ENCODE measurements at regions of chr11 and their contacts with region 1.

Region 1: GRCh38 chr11:10878408-10879214 is 20.8 kb upstream of the ZBED5 start:
- DNase-seq: no peak
- ATAC-seq: peak; percentile 84
- H3K4me3 Mint-ChIP-seq: no peak overlapping the region
- H3K27ac Mint-ChIP-seq: no peak overlapping the region
- H3K4me1 Mint-ChIP-seq: peaks cover 13% of the 10 kb centered on the region
- H3K27me3 Mint-ChIP-seq: no peaks in the 10 kb centered on the region
- CTCF ChIP-seq: no peak

Region 2: DNA sequence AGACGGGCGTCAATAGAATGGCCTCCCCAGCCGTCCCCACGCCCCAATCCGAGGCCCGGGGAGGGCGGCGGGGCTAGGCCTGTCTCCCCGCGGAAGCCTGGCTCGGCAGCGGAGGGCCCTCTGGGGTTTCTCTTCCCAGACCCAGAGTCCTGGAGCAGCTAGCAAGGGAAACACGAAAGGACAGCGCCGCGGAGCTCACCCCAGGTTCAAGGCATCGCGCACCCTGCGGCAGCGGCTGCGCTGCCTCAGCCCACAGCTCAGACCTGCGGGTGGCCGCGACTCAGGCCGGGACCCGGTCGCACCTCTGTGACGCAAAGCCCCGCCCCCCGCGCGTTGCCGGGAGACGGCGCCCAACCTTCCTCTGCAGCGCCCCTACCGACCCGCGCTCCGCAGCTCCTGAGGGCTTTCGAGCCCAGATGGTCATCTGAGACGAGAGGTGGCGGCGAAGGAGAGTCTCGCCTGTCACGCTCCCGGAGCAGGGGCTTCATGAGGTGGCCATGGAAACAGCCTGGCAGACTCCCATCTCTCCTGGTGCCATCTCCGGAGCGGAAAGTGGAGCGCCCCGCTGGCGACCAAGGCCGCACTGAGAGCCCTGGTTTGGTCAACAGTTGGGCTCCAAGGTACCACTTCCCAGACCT is 337.6 kb before region 1 on chr11 and contains the start of gene RNF141:
- CTCF ChIA-PET with region 1: no interaction called
- POLR2A ChIA-PET with region 1: no interaction called
- intact Hi-C with region 1: no loop called
- DNase-seq: peak; percentile 99
- ATAC-seq: peak; percentile 91
- H3K4me3 Mint-ChIP-seq: peak within 1 kb of the TSS; percentile 90
- H3K27ac Mint-ChIP-seq: peak within 1 kb of the TSS; percentile 95
- H3K4me1 Mint-ChIP-seq: peaks cover 80% of the 10 kb centered on the region
- H3K27me3 Mint-ChIP-seq: no peaks in the 10 kb centered on the region
- CTCF ChIP-seq: no peak
- total RNA-seq, gene RNF141: 32.8 and 36.9 TPM in 2 replicates

Region 3: DNA sequence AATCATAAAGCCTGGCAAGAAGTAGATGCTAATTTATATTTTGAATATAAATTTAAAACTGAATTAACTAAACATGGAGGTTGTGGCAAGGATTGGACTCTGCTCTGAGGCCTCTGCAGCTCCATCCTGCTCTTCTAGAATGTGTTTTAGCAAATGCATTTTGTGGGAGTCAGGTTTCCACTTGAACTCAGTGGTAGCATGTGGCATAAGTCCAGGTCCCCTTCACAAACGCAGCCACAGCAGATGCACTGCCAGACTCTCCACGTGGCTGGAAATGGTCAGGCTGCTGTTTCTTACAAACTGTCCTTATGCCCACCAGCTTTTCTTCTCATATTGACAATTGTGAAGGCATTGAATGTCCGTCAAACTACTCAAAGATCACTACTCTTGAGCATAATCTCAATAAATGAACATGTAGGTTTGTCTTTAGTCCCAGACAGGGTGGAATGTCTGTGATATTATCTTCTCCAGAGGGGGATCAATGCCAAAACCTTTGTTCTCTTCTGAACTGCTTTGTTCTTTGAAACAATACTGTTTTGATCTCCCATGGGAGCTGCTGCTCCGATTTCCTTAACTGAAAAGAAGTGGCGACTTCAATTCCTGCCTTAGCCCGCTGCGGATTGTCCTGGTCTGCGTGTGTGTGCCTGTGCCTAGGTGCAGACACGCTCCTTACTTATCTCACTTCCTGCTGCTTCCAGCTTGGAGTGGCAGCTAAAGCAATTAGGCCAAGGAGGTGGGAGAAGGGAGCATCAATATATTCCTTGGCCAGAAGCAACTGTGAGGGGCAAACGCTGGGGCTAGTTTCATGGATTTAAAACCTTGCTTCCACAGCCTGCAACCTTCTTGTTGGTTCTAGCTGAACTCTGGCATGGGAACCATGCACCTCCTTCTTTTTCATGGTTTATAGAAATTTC is 94.1 kb before region 1 on chr11:
- CTCF ChIA-PET with region 1: no interaction called
- POLR2A ChIA-PET with region 1: no interaction called
- intact Hi-C with region 1: no loop called
- DNase-seq: no peak
- ATAC-seq: no peak
- H3K4me3 Mint-ChIP-seq: no peak overlapping the region
- H3K27ac Mint-ChIP-seq: no peak overlapping the region
- H3K4me1 Mint-ChIP-seq: no peaks in the 10 kb centered on the region
- H3K27me3 Mint-ChIP-seq: no peaks in the 10 kb centered on the region
- CTCF ChIP-seq: no peak

Region 4: GRCh38 chr11:10893714-10894151 is 15.1 kb after region 1 on chr11:
- CTCF ChIA-PET with region 1: interaction called, 4 read pairs
- POLR2A ChIA-PET with region 1: no interaction called
- intact Hi-C with region 1: loop called (anchors 1 kb)
- DNase-seq: no peak
- ATAC-seq: no peak
- H3K4me3 Mint-ChIP-seq: no peak overlapping the region
- H3K27ac Mint-ChIP-seq: no peak overlapping the region
- H3K4me1 Mint-ChIP-seq: peaks cover 13% of the 10 kb centered on the region
- H3K27me3 Mint-ChIP-seq: no peaks in the 10 kb centered on the region
- CTCF ChIP-seq: no peak

Region 5: GRCh38 chr11:10973416-10973815 is 94.8 kb after region 1 on chr11:
- CTCF ChIA-PET with region 1: no interaction called
- POLR2A ChIA-PET with region 1: interaction called, 15 read pairs
- intact Hi-C with region 1: no loop called
- DNase-seq: no peak
- ATAC-seq: no peak
- H3K4me3 Mint-ChIP-seq: no peak overlapping the region
- H3K27ac Mint-ChIP-seq: no peak overlapping the region
- H3K4me1 Mint-ChIP-seq: peaks cover 32% of the 10 kb centered on the region
- H3K27me3 Mint-ChIP-seq: no peaks in the 10 kb centered on the region
- CTCF ChIP-seq: no peak

Region 6: DNA sequence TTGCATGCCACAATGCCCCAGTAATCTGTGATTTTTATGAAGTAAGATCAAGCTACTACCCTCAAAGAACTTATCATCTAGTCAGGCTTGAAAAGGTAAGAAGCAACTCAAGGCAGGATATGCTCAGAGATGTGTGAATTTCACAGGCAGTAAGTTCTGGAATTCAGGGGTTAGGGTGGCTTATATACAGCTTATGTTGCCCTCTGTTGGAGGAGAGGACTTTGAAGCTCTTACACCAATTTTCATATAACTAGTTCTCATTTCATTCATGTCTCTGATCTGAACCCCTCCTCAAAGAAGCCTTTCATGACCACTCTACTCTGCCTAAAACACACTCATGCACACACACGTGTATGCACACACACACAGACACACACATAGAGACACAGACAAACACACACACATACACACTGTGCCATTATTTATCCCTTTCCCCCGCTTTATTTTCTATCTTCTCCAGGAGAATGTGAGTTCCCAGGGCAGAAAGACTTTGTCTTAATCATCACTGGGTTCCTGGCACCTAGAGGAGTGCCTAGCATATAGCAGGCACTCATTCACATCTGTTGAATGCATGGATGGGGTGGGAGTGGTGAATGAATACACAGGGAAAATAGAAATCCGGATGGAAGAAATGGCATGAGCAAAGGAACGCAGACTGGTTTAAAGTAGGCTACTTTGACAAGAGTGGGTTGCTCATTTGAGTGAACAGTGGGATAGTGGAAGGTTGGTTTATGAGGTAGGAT is 199.9 kb after region 1 on chr11:
- CTCF ChIA-PET with region 1: no interaction called
- POLR2A ChIA-PET with region 1: no interaction called
- intact Hi-C with region 1: no loop called
- DNase-seq: no peak
- ATAC-seq: no peak
- H3K4me3 Mint-ChIP-seq: no peak overlapping the region
- H3K27ac Mint-ChIP-seq: no peak overlapping the region
- H3K4me1 Mint-ChIP-seq: no peaks in the 10 kb centered on the region
- H3K27me3 Mint-ChIP-seq: peaks cover 24% of the 10 kb centered on the region
- CTCF ChIP-seq: no peak

Region 7: DNA sequence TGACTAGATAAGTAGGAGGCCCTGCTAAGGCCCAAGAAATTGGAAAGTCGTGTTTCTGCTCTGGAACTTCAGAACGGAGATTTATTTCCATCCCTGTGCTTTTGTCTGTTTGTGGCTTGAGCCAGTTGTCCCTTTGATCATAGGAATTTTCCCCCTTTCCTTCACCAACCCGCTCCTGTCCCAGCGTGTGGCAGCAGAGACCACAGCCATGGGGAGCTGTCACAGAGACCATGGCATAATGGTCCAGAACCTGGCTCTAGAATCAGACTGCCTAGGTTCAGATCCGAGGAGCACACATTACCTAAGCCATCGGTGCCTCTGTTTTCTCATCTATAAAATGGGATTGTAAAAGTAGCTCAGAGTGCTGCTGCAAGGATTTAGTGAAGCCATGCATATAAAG is 615.1 kb after region 1 on chr11:
- CTCF ChIA-PET with region 1: no interaction called
- POLR2A ChIA-PET with region 1: no interaction called
- intact Hi-C with region 1: no loop called
- DNase-seq: no peak
- ATAC-seq: no peak
- H3K4me3 Mint-ChIP-seq: no peak overlapping the region
- H3K27ac Mint-ChIP-seq: no peak overlapping the region
- H3K4me1 Mint-ChIP-seq: no peaks in the 10 kb centered on the region
- H3K27me3 Mint-ChIP-seq: no peaks in the 10 kb centered on the region
- CTCF ChIP-seq: no peak

Measured in activated B cell treated with CpG ODN at 0.5 μM for 24 hours (primary cell).